Mucosa of descending colon (tissue), 3 donors: ENCODE measurements at regions of chr4 and their contacts with region 1.

Region 1: DNA sequence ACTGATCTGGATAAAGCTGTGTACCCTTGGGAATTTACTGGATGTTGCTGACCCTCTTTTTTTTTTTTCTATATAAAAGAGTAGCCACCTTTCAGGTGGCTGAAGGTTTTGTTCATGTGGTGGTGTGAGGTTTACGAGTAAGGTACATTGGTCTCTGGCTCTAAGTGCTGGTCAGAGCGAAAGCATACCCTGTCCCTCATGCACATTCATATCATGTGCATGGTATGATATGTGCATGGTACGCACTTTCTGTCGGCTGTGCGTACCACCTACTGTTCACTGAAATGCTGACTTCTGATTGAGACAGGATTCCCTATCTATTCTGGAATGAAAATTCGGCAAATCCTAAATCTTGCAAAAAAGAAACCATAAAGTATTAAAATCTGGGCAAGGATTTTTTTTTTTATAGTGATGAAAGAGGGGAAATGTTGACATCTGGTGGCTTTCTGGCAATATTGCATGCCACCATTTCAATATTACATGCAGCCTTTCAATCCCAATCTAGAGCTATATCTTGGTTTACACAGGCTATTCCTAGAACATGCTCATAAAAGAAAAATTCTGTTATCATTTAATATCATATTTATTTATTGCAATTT is 32.8 kb downstream of the FAM149A start:
- DNase-seq: peak in 1 of 3 donors; percentile 27
- ATAC-seq: peak; percentile 55
- H3K4me3 ChIP-seq: no peak overlapping the region
- H3K4me1 ChIP-seq: no peaks in the 10 kb centered on the region
- CTCF ChIP-seq: peak; percentile 34

Region 2: GRCh38 chr4:186015212-186015785 is 122.0 kb before region 1 on chr4:
- intact Hi-C with region 1: no loop called
- DNase-seq: no peak
- ATAC-seq: no peak
- H3K4me3 ChIP-seq: no peak overlapping the region
- H3K4me1 ChIP-seq: no peaks in the 10 kb centered on the region
- CTCF ChIP-seq: no peak

Region 3: GRCh38 chr4:186067757-186068385 is 69.4 kb before region 1 on chr4:
- intact Hi-C with region 1: loop called in 1 of 2 experiments (anchors 10 kb)
- DNase-seq: peak in 2 of 3 donors; percentile 64 to 82
- ATAC-seq: peak; percentile 96
- H3K4me3 ChIP-seq: no peak overlapping the region
- H3K4me1 ChIP-seq: no peaks in the 10 kb centered on the region
- CTCF ChIP-seq: peak; percentile 31